CD4-positive, alpha-beta memory T cell (primary cell): ENCODE measurements at regions of chr3 and their contacts with region 1.

Region 1: DNA sequence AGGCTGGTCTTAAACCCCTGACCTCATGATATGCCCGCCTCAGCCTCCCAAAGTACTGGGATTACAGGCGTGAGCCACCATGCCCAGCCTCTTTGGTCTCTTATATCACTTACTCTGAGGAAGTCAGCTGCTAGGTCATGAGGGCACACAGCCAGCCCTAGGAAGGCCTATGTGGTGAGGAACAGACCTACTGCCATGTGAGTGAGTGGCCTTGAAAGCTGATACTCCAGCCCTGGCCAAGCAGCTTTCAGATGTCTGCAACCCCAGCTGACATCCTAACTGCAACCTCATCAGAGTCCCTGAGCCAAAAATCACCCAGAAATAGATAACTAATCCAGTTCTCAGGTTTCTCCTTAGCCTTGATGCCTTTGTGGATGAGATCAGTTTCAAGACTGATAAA is 224.3 kb downstream of the EDEM1 start:
- DNase-seq: no peak
- H3K4me3 ChIP-seq: no peak overlapping the region
- H3K4me3 Mint-ChIP-seq: no peak overlapping the region
- H3K27ac ChIP-seq: no peak overlapping the region
- H3K27ac Mint-ChIP-seq: no peak overlapping the region
- H3K4me1 ChIP-seq: no peaks in the 10 kb centered on the region
- H3K4me1 Mint-ChIP-seq: no peaks in the 10 kb centered on the region
- H3K27me3 ChIP-seq: no peaks in the 10 kb centered on the region
- H3K27me3 Mint-ChIP-seq: peaks cover 6 to 10% of the 10 kb centered on the region in 2 donors

Region 2: DNA sequence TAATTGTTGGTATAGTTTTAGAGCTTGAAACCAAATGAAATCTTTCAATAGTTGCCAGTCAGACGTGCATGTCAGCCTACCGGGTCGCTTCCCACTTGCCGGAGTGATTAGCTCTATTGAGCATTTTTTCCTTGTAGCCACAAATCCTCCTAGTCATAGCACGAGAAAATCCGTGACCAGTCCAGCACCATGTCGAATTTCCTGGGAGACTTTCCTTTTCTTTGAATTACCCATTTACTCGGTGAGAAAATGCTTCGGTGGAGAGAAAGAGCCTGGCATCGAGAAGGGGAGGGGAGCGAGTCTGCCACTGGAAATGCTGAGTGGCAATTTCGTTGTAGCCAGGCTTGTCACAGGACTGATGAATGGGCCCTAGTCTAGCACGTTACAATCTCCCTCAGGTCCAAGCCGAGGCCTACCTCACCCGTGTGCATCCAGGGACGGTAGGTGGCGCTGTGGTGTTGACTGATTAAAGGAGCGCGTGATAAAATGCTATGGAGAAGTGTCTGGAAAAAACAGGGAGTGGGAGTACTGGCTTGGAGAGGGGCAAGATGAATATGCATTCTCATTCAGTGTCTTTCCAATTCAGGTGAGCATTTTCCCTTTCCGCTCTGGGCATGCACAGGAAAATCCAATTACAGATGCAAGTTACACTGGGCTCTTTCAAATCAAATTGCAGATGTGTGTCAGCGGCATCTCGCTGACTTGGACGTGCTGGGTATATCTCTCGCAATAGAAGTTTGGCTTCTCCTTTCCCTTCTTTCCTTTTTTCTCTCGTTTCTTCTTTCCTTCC is 14.5 kb after region 1 on chr3:
- CTCF ChIA-PET with region 1: interaction called, 10 read pairs
- POLR2A ChIA-PET with region 1: no interaction called
- intact Hi-C with region 1: no loop called
- DNase-seq: peak in 4 of 5 donors; percentile 20 to 31 (median 20)
- H3K4me3 ChIP-seq: no peak overlapping the region
- H3K4me3 Mint-ChIP-seq: no peak overlapping the region
- H3K27ac ChIP-seq: no peak overlapping the region
- H3K27ac Mint-ChIP-seq: peak overlapping the region in 1 of 7 donors; percentile 15
- H3K4me1 ChIP-seq: no peaks in the 10 kb centered on the region
- H3K4me1 Mint-ChIP-seq: peaks cover 6 to 10% (median 9%) of the 10 kb centered on the region in 4 donors
- H3K27me3 ChIP-seq: no peaks in the 10 kb centered on the region
- H3K27me3 Mint-ChIP-seq: peaks cover 2 to 12% of the 10 kb centered on the region in 2 donors